WTC11 (cell line): ENCODE measurements at regions of chr11 and their contacts with region 1.

Region 1: DNA sequence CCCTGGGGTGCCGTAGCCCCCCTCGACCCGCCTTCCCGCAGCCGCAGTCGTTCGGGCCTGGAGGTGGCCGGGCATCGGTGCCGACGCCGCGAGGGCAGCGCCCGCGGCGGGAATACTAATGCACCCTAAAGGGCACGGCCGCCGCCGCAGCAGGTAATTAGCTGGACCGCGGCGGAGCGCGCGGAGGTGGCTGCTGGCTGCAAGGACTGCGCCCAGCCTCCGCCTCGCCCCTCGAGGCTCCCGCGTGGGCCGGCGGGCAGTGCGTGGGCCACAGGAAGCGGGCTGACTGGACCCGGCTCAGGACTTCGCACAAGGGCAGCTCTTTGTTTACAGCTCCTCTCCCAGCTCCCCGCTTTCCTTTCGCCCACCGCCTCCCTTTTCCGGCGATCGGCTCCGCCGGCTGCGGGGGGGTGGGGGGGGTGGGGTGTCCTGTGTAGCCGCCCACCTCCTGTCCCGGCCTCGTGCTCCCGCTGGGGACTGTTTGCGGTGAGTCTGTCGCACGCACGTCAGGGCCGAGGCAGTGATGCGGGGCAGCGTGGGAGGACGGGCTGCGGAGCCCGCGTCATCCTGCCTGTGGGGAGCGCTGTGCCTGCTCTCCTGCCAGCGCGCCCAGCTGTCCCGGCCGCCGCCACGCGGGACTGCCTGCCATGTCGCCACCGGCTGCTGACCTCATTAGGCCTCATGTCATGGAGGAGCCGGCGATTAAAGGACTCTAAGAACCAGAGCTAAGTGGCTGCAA is 53.2 kb downstream of the GRIK4 start:
- DNase-seq: peak; percentile 38
- ATAC-seq: peak; percentile 11
- H3K4me3 Mint-ChIP-seq: peak overlapping the region; percentile 58
- H3K27ac Mint-ChIP-seq: no peak overlapping the region
- H3K4me1 Mint-ChIP-seq: peaks cover 42% of the 10 kb centered on the region
- H3K27me3 Mint-ChIP-seq: peaks cover 38% of the 10 kb centered on the region
- CTCF ChIP-seq: no peak

Region 2: GRCh38 chr11:120117991-120118390 is 446.8 kb before region 1 on chr11:
- CTCF ChIA-PET with region 1: no interaction called
- POLR2A ChIA-PET with region 1: no interaction called
- DNase-seq: no peak
- ATAC-seq: peak; percentile 15; the same call in 1 of the 2 replicates
- H3K4me3 Mint-ChIP-seq: no peak overlapping the region
- H3K27ac Mint-ChIP-seq: no peak overlapping the region
- H3K4me1 Mint-ChIP-seq: peaks cover 12% of the 10 kb centered on the region
- H3K27me3 Mint-ChIP-seq: no peaks in the 10 kb centered on the region
- CTCF ChIP-seq: no peak

Region 3: GRCh38 chr11:120391292-120391691 is 173.4 kb before region 1 on chr11:
- CTCF ChIA-PET with region 1: no interaction called
- POLR2A ChIA-PET with region 1: no interaction called
- DNase-seq: no peak
- ATAC-seq: peak; percentile 70
- H3K4me3 Mint-ChIP-seq: no peak overlapping the region
- H3K27ac Mint-ChIP-seq: peak overlapping the region; percentile 83; the same call in 1 of the 2 replicates
- H3K4me1 Mint-ChIP-seq: peaks cover 24% of the 10 kb centered on the region
- H3K27me3 Mint-ChIP-seq: no peaks in the 10 kb centered on the region
- CTCF ChIP-seq: no peak

Region 4: GRCh38 chr11:120511116-120511819 is 53.5 kb before region 1 on chr11 and contains the start of gene GRIK4:
- CTCF ChIA-PET with region 1: interaction called, 34 read pairs
- POLR2A ChIA-PET with region 1: no interaction called
- DNase-seq: peak; percentile 92
- ATAC-seq: peak; percentile 87
- H3K4me3 Mint-ChIP-seq: peak within 1 kb of the TSS; percentile 61
- H3K27ac Mint-ChIP-seq: no peak within 1 kb of the TSS
- H3K4me1 Mint-ChIP-seq: peaks cover 11% of the 10 kb centered on the region
- H3K27me3 Mint-ChIP-seq: peaks cover 25% of the 10 kb centered on the region
- CTCF ChIP-seq: peak; percentile 92
- total RNA-seq, gene GRIK4: 2.9 to 3.6 TPM (median 3.3 TPM) in 3 replicates

Region 5: GRCh38 chr11:120527111-120527761 is 37.5 kb before region 1 on chr11:
- CTCF ChIA-PET with region 1: interaction called, 11 read pairs
- POLR2A ChIA-PET with region 1: no interaction called
- DNase-seq: peak; percentile 86
- ATAC-seq: peak; percentile 91
- H3K4me3 Mint-ChIP-seq: peak overlapping the region; percentile 25; the same call in 1 of the 2 replicates
- H3K27ac Mint-ChIP-seq: peak overlapping the region; percentile 89
- H3K4me1 Mint-ChIP-seq: peaks cover 48% of the 10 kb centered on the region
- H3K27me3 Mint-ChIP-seq: no peaks in the 10 kb centered on the region; the same call in 1 of the 2 replicates
- CTCF ChIP-seq: no peak

Region 6: GRCh38 chr11:120539667-120540369 is 24.9 kb before region 1 on chr11:
- CTCF ChIA-PET with region 1: interaction called, 19 read pairs
- POLR2A ChIA-PET with region 1: no interaction called
- DNase-seq: no peak
- ATAC-seq: no peak
- H3K4me3 Mint-ChIP-seq: no peak overlapping the region
- H3K27ac Mint-ChIP-seq: no peak overlapping the region
- H3K4me1 Mint-ChIP-seq: peaks cover 6% of the 10 kb centered on the region
- H3K27me3 Mint-ChIP-seq: no peaks in the 10 kb centered on the region
- CTCF ChIP-seq: no peak

Region 7: GRCh38 chr11:120547811-120548681 is 16.7 kb before region 1 on chr11:
- CTCF ChIA-PET with region 1: interaction called, 11 read pairs
- POLR2A ChIA-PET with region 1: interaction called, 3 read pairs
- DNase-seq: no peak
- ATAC-seq: peak; percentile 40
- H3K4me3 Mint-ChIP-seq: no peak overlapping the region
- H3K27ac Mint-ChIP-seq: peak overlapping the region; percentile 2; the same call in 1 of the 2 replicates
- H3K4me1 Mint-ChIP-seq: peaks cover 52% of the 10 kb centered on the region
- H3K27me3 Mint-ChIP-seq: peaks cover 2% of the 10 kb centered on the region
- CTCF ChIP-seq: no peak

Region 8: GRCh38 chr11:120645639-120646038 is 80.9 kb after region 1 on chr11:
- CTCF ChIA-PET with region 1: interaction called, 14 read pairs
- POLR2A ChIA-PET with region 1: no interaction called
- DNase-seq: peak; percentile 85
- ATAC-seq: peak; percentile 76
- H3K4me3 Mint-ChIP-seq: peak overlapping the region; percentile 48
- H3K27ac Mint-ChIP-seq: no peak overlapping the region
- H3K4me1 Mint-ChIP-seq: peaks cover 46% of the 10 kb centered on the region
- H3K27me3 Mint-ChIP-seq: peaks cover 98% of the 10 kb centered on the region
- CTCF ChIP-seq: no peak